Cardiac septum (tissue), 1 donor: ENCODE measurements at regions of chr13 and their contacts with region 1.

Region 1: GRCh38 chr13:99916366-99917103 is 55.0 kb downstream of the ZIC5 start:
- DNase-seq: no peak

Region 2: GRCh38 chr13:99969919-99970621 is 53.5 kb after region 1 on chr13:
- intact Hi-C with region 1: no loop called
- DNase-seq: no peak

Region 3: GRCh38 chr13:100235311-100235901 is 318.9 kb after region 1 on chr13:
- intact Hi-C with region 1: loop called (anchors 5 kb)
- DNase-seq: no peak